ENCODE measurements at regions of chr7 and their contacts with region 1.

Region 1: DNA sequence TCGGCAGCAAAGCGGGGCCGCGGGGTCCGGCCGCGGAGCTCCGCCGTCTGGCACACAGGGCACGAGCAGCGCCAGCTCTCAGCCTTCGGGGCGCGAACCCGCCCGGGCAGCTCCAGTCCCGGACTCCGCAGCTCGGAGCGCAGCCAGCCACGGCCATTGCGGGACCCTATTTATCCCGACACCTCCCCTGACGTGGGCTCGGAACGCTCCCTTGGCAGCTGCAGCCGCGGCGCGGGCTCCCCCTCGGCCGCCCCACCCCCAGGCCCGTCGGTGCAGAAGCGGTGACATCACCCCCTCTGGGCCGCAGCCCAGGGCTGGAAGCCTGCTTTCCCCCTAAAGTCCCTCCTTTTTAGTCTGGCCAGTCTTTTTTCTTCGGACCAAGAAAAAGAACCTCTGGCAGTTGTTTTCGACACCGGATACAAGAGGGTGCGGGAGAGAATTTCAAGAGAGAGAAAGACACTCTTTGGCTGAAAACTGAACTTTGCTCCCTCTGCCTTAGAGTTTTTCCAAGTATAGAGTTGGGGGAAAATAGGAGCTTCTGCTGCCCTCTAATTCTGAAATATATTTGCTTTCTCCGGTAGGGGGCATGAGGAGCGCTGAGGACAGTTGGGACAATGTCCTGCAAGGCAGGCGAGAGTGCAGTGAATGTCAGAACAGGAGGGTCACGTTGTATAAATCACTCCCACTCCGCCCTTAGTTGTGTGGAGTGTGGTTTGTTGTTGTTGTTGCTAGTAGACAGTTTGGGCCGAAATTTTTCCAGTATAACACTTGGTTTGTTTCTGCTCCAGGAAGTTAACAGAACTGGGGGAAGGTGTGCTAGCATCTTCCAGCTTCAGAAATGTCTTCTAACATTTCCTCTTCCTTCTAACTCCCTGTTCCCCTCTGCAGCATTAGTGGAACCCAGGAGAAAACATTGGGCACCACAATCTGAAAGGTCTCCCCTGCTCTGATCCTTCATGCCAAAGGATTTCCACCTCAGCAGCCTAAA is at the start of gene SFRP4:
- DNase-seq: no peak
- ATAC-seq: peak; percentile 44
- H3K4me3 ChIP-seq: peak within 1 kb of the TSS; percentile 48
- H3K27ac ChIP-seq: no peak within 1 kb of the TSS
- H3K4me1 ChIP-seq: peaks cover 13% of the 10 kb centered on the region
- H3K27me3 ChIP-seq: peaks cover 0 to 4% of the 10 kb centered on the region in 2 experiments; a peak in 2 of 4 replicates
- CTCF ChIP-seq: peak; percentile 72 to 74 (median 73)
- EP300 ChIP-seq: no peak
- POLR2A ChIP-seq: no peak
- RAD21 ChIP-seq: peak; percentile 67
- polyA plus RNA-seq, gene SFRP4: 0.02 TPM in 1 of 2 experiments, not detected in the other

Region 2: DNA sequence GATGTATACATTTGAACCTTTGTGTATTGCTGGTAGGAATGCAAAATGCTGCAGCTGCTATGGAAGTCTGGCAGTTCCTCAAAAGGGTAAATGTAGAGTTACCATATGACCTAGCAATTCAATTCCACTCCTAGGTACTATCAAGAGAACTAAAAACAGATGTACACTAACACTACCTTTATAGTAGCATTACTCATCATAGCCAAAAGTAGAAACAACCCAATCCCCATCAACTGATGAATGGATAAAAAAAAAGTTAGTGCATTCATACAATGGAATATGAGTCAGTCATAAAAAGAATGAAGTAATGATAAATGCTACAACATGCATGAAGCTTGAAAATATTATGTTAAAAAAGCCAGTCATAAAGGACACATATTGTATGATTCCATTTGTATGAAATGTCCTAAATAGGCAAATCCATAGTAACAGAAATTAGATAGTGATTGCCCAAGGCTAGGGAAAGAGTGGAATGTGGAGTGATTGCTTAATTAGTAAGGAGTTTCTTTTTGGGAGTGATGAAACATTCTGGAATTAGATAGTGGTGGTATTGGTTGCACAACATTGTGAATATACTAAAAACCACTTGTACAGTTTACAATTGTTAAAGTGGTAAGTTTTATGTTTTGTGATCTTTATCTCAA is 1096.3 kb before region 1 on chr7:
- CTCF ChIA-PET with region 1: no interaction called
- POLR2A ChIA-PET with region 1: no interaction called
- RAD21 ChIA-PET with region 1: no interaction called
- SMC1A ChIA-PET with region 1: no interaction called
- in situ Hi-C with region 1: no loop called
- intact Hi-C with region 1: no loop called
- DNase-seq: no peak
- ATAC-seq: no peak
- H3K4me3 ChIP-seq: no peak overlapping the region
- H3K27ac ChIP-seq: no peak overlapping the region
- H3K4me1 ChIP-seq: no peaks in the 10 kb centered on the region
- H3K27me3 ChIP-seq: no peaks in the 10 kb centered on the region; a peak in 1 of 4 replicates
- CTCF ChIP-seq: no peak
- EP300 ChIP-seq: no peak
- POLR2A ChIP-seq: no peak
- RAD21 ChIP-seq: no peak

Region 3: DNA sequence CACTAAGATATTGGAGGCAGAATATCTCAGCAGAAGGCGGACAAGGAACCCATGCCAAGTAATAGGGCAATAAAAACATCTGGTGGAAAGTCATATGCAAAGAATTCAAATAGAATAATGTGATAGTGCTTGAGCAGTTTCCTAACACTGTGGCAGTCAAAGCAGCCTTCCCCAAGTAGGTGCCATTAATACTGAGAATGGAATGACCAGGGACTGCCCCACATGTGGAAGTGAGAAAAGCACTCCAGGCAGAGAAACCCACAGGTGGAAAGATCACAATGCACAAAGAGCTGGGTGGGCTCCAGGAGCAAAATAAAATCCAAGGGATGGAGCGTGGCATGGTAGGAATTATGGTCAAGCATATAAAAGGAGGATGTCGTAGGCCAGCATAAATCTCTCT is 133.0 kb before region 1 on chr7:
- CTCF ChIA-PET with region 1: no interaction called
- POLR2A ChIA-PET with region 1: no interaction called
- RAD21 ChIA-PET with region 1: no interaction called
- SMC1A ChIA-PET with region 1: no interaction called
- in situ Hi-C with region 1: no loop called
- intact Hi-C with region 1: no loop called
- DNase-seq: peak; percentile 51
- ATAC-seq: peak; percentile 61
- H3K4me3 ChIP-seq: no peak overlapping the region
- H3K27ac ChIP-seq: peak overlapping the region; percentile 63
- H3K4me1 ChIP-seq: peaks cover 50% of the 10 kb centered on the region
- H3K27me3 ChIP-seq: no peaks in the 10 kb centered on the region
- CTCF ChIP-seq: no peak
- EP300 ChIP-seq: peak in 1 of 2 experiments; percentile 46; a peak in 1 of 4 replicates
- POLR2A ChIP-seq: no peak
- RAD21 ChIP-seq: no peak

Region 4: DNA sequence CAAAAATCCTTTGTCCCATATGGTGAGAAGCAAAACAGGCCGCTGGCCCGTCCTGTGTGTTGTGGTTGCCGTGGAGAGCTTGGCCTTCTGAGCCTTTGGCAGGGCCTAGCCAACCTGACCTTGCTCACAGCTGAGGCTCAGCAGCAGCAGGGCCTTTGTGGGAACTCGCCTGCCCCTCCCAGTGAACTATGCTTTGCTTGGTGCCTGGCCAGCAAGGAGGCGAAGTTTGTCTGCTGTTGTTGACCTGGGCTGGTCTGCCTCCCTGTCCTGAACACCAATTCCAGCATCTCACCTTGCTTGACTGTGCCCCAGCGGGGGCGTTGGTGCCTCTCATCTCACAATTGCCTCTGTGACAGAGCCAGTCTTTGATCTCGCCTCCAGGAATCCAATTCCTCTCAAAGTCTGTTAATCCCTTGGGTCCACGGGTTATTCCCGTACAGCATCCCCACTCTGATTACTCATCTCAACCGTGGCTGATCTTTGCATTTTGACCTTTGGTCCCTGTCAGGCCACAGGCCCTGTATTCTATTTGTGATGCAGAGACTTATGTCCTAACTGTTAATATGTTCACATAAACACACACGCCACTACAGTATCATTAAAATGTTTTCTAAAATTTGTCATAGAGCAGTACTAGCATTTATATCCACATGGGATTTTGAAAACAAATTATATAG is 26.1 kb after region 1 on chr7:
- CTCF ChIA-PET with region 1: interaction called, 108 read pairs
- POLR2A ChIA-PET with region 1: interaction called, 17 read pairs
- RAD21 ChIA-PET with region 1: interaction called, 30 read pairs
- SMC1A ChIA-PET with region 1: interaction called, 98 read pairs
- in situ Hi-C with region 1: no loop called
- intact Hi-C with region 1: no loop called
- DNase-seq: peak; percentile 33
- ATAC-seq: peak; percentile 67
- H3K4me3 ChIP-seq: no peak overlapping the region
- H3K27ac ChIP-seq: no peak overlapping the region
- H3K4me1 ChIP-seq: peaks cover 3% of the 10 kb centered on the region; the same call in 1 of the 2 replicates
- H3K27me3 ChIP-seq: no peaks in the 10 kb centered on the region
- CTCF ChIP-seq: no peak
- EP300 ChIP-seq: no peak
- POLR2A ChIP-seq: no peak
- RAD21 ChIP-seq: no peak

Region 5: DNA sequence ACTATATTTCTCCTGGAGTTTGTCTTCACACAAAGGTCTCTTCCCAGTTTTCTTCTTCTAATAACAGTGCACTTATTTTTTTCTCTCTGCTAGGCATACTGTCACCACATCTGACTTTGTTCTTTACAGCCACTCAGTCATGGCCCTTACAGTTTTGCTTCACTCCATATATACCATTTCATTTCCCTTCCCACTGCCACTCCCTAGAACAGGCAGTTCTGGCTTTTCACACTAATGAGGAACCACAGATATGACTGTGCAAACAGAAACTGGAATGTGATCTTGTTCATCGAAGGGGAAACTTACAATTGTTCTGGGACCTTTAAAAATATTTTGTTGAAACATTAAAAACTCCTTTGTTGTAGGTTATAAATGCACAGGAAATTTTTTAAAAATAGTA is 70.8 kb after region 1 on chr7:
- CTCF ChIA-PET with region 1: interaction called, 16 read pairs
- POLR2A ChIA-PET with region 1: no interaction called
- RAD21 ChIA-PET with region 1: interaction called, 6 read pairs
- SMC1A ChIA-PET with region 1: interaction called, 4 read pairs
- in situ Hi-C with region 1: no loop called
- intact Hi-C with region 1: no loop called
- DNase-seq: no peak
- ATAC-seq: peak; percentile 36
- H3K4me3 ChIP-seq: no peak overlapping the region
- H3K27ac ChIP-seq: no peak overlapping the region
- H3K4me1 ChIP-seq: 0 out of 2 replicates have a peak, but pooled peaks cover under 1% of the 10 kb centered on the region
- H3K27me3 ChIP-seq: no peaks in the 10 kb centered on the region
- CTCF ChIP-seq: no peak
- EP300 ChIP-seq: no peak
- POLR2A ChIP-seq: no peak
- RAD21 ChIP-seq: no peak

Region 6: GRCh38 chr7:38040831-38041230 is 123.9 kb after region 1 on chr7:
- CTCF ChIA-PET with region 1: interaction called, 34 read pairs
- POLR2A ChIA-PET with region 1: no interaction called
- RAD21 ChIA-PET with region 1: interaction called, 17 read pairs
- SMC1A ChIA-PET with region 1: interaction called, 8 read pairs
- in situ Hi-C with region 1: no loop called
- intact Hi-C with region 1: no loop called
- DNase-seq: no peak
- ATAC-seq: peak; percentile 63
- H3K4me3 ChIP-seq: no peak overlapping the region
- H3K27ac ChIP-seq: no peak overlapping the region
- H3K4me1 ChIP-seq: no peaks in the 10 kb centered on the region
- H3K27me3 ChIP-seq: 0 out of 4 replicates have a peak, but pooled peaks cover 0 to 2% of the 10 kb centered on the region in 2 experiments
- CTCF ChIP-seq: no peak
- EP300 ChIP-seq: no peak
- POLR2A ChIP-seq: no peak
- RAD21 ChIP-seq: no peak

Region 7: GRCh38 chr7:38169847-38170246 is 252.9 kb after region 1 on chr7:
- CTCF ChIA-PET with region 1: interaction called, 14 read pairs
- POLR2A ChIA-PET with region 1: no interaction called
- RAD21 ChIA-PET with region 1: interaction called, 4 read pairs
- SMC1A ChIA-PET with region 1: interaction called, 3 read pairs
- in situ Hi-C with region 1: no loop called
- intact Hi-C with region 1: no loop called
- DNase-seq: peak; percentile 85
- ATAC-seq: peak; percentile 82
- H3K4me3 ChIP-seq: 0 out of 2 replicates have a peak overlapping the region, but pooled peaks have one; percentile 6
- H3K27ac ChIP-seq: peak overlapping the region; percentile 57
- H3K4me1 ChIP-seq: peaks cover 34% of the 10 kb centered on the region
- H3K27me3 ChIP-seq: no peaks in the 10 kb centered on the region
- CTCF ChIP-seq: no peak
- EP300 ChIP-seq: peak; percentile 38 to 83; a peak in 3 of 4 replicates
- POLR2A ChIP-seq: no peak
- RAD21 ChIP-seq: no peak

Region 8: DNA sequence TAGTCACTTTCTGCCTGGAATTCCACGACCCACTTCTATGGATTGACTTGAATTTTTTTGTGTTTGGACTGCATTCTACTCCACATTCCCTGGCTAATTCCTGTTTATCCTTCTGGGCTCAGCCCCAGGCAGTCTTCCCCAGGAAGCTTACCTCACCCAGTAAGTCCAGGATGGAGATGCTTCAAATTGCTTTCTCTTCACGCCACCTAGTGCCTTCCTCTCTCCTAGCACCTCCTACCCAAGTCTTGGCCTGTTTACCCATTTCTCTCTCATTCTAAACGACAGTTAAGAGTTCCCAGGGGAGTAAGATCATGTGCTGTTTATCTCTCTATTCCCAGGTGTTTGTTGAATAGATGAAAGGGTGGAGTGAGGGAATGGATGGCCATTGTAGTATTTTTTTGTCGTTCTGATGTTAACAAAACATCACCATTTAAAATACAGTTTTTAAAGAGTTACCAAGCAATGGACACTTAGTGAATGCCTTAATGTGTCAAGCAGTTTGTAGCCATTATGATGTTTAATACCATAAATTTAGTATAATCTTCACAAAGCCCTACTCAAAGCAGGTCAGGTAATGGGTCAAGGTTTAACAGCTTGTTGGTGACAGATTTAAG is 401.9 kb after region 1 on chr7:
- CTCF ChIA-PET with region 1: interaction called, 26 read pairs
- POLR2A ChIA-PET with region 1: no interaction called
- RAD21 ChIA-PET with region 1: interaction called, 13 read pairs
- SMC1A ChIA-PET with region 1: interaction called, 6 read pairs
- in situ Hi-C with region 1: no loop called
- intact Hi-C with region 1: no loop called
- DNase-seq: no peak
- ATAC-seq: peak; percentile 96
- H3K4me3 ChIP-seq: no peak overlapping the region
- H3K27ac ChIP-seq: no peak overlapping the region
- H3K4me1 ChIP-seq: no peaks in the 10 kb centered on the region
- H3K27me3 ChIP-seq: no peaks in the 10 kb centered on the region
- CTCF ChIP-seq: peak; percentile 74 to 88 (median 82)
- EP300 ChIP-seq: no peak
- POLR2A ChIP-seq: no peak
- RAD21 ChIP-seq: peak; percentile 93